Dorsolateral prefrontal cortex (tissue), 120 donors: ENCODE measurements at regions of chr5 and their contacts with region 1.

Region 1: GRCh38 chr5:40736103-40736875 is 19.5 kb downstream of the TTC33 start:
- DNase-seq: no peak
- H3K4me3 ChIP-seq: no peak overlapping the region
- H3K27ac ChIP-seq: peak overlapping the region in 8 of 59 donors; percentile 2 to 49 (median 13)
- H3K27me3 ChIP-seq: no peaks in the 10 kb centered on the region
- CTCF ChIP-seq: peak; percentile 52 to 96 (median 78)

Region 2: GRCh38 chr5:39948867-39949468 is 787.3 kb before region 1 on chr5:
- intact Hi-C with region 1: loop called in 1 of 2 experiments (anchors 5 kb)
- DNase-seq: peak in 2 of 10 donors; percentile 7 to 57
- H3K4me3 ChIP-seq: no peak overlapping the region
- H3K27ac ChIP-seq: no peak overlapping the region
- H3K27me3 ChIP-seq: no peaks in the 10 kb centered on the region
- CTCF ChIP-seq: peak; percentile 47 to 83 (median 71)

Region 3: GRCh38 chr5:40497573-40497972 is 238.7 kb before region 1 on chr5:
- intact Hi-C with region 1: no loop called
- DNase-seq: no peak
- H3K4me3 ChIP-seq: no peak overlapping the region
- H3K27ac ChIP-seq: no peak overlapping the region
- H3K27me3 ChIP-seq: no peaks in the 10 kb centered on the region
- CTCF ChIP-seq: no peak